ENCODE measurements at regions of chr6 and their contacts with region 1.

Region 1: DNA sequence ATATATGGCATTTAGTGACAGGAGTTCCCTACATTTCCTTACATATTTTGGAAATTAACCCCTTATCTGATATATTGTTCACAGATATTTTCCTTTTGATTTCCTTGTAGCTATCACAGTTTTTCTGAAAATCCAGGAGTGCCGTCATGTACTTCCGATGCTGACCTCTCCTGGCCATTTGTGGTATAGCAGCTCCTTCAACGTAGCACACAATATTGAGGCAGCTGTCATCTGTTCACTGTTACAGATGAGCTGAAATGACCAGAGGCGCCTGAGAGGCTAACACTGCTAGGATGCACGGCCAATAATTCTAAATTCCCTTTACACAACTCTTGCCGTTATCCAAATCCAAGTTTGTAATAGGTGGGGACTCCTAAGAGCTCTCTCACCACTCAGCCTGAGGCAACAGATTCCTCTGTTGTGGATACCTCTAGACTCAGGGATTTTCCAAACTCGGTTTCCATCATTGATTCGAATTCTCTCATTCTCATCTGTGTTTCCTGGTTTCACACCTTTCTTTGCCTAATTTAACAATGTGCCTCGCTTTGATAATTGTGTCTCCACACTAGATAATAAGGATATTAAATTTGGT is 53.0 kb downstream of the MMUT start:
- DNase-seq: no peak
- H3K4me3 ChIP-seq: no peak overlapping the region
- CTCF ChIP-seq: peak; percentile 83

Region 2: GRCh38 chr6:47787620-47788497 is 1622.2 kb before region 1 on chr6:
- CTCF ChIA-PET with region 1: interaction called, 50 read pairs
- POLR2A ChIA-PET with region 1: no interaction called
- DNase-seq: no peak
- H3K4me3 ChIP-seq: no peak overlapping the region
- CTCF ChIP-seq: peak; percentile 86

Region 3: GRCh38 chr6:49329186-49329585 is 80.9 kb before region 1 on chr6:
- CTCF ChIA-PET with region 1: interaction called, 10 read pairs
- POLR2A ChIA-PET with region 1: no interaction called
- DNase-seq: no peak
- H3K4me3 ChIP-seq: no peak overlapping the region
- CTCF ChIP-seq: no peak

Region 4: GRCh38 chr6:49423817-49424216 is 13.8 kb after region 1 on chr6:
- CTCF ChIA-PET with region 1: interaction called, 16 read pairs
- POLR2A ChIA-PET with region 1: no interaction called
- DNase-seq: no peak
- H3K4me3 ChIP-seq: no peak overlapping the region
- CTCF ChIP-seq: no peak

Measured in AG04449 (cell line).